Calu3 (cell line): ENCODE measurements at regions of chrX and their contacts with region 1.

Region 1: GRCh38 chrX:41116948-41117347 is 31.7 kb downstream of the USP9X start:
- DNase-seq: no peak
- H3K4me3 Mint-ChIP-seq: peak overlapping the region; percentile 31
- H3K27ac Mint-ChIP-seq: no peak overlapping the region
- H3K4me1 Mint-ChIP-seq: peaks cover 51% of the 10 kb centered on the region
- H3K27me3 Mint-ChIP-seq: no peaks in the 10 kb centered on the region
- CTCF ChIP-seq: no peak

Region 2: GRCh38 chrX:40651620-40652223 is 465.2 kb before region 1 on chrX:
- CTCF ChIA-PET with region 1: interaction called, 6 read pairs
- intact Hi-C with region 1: loop called (anchors 5 kb)
- DNase-seq: peak; percentile 71
- H3K4me3 Mint-ChIP-seq: no peak overlapping the region
- H3K27ac Mint-ChIP-seq: peak overlapping the region; percentile 20
- H3K4me1 Mint-ChIP-seq: no peaks in the 10 kb centered on the region
- H3K27me3 Mint-ChIP-seq: no peaks in the 10 kb centered on the region
- CTCF ChIP-seq: peak; percentile 25

Region 3: GRCh38 chrX:40877887-40878286 is 239.1 kb before region 1 on chrX:
- CTCF ChIA-PET with region 1: interaction called, 13 read pairs
- intact Hi-C with region 1: loop called (anchors 5 kb)
- DNase-seq: peak; percentile 8
- H3K4me3 Mint-ChIP-seq: no peak overlapping the region
- H3K27ac Mint-ChIP-seq: no peak overlapping the region
- H3K4me1 Mint-ChIP-seq: no peaks in the 10 kb centered on the region
- H3K27me3 Mint-ChIP-seq: no peaks in the 10 kb centered on the region
- CTCF ChIP-seq: peak; percentile 27

Region 4: GRCh38 chrX:40922307-40922706 is 194.6 kb before region 1 on chrX:
- CTCF ChIA-PET with region 1: interaction called, 8 read pairs
- intact Hi-C with region 1: loop called (anchors 10 kb)
- DNase-seq: peak; percentile 32
- H3K4me3 Mint-ChIP-seq: no peak overlapping the region
- H3K27ac Mint-ChIP-seq: no peak overlapping the region
- H3K4me1 Mint-ChIP-seq: peaks cover 31% of the 10 kb centered on the region
- H3K27me3 Mint-ChIP-seq: no peaks in the 10 kb centered on the region
- CTCF ChIP-seq: peak; percentile 14

Region 5: GRCh38 chrX:41090568-41091238 is 26.2 kb before region 1 on chrX:
- CTCF ChIA-PET with region 1: interaction called, 10 read pairs
- intact Hi-C with region 1: no loop called
- DNase-seq: no peak
- H3K4me3 Mint-ChIP-seq: peak overlapping the region; percentile 89
- H3K27ac Mint-ChIP-seq: no peak overlapping the region
- H3K4me1 Mint-ChIP-seq: peaks cover 25% of the 10 kb centered on the region
- H3K27me3 Mint-ChIP-seq: no peaks in the 10 kb centered on the region
- CTCF ChIP-seq: no peak